PC-3 (cell line): ENCODE measurements at regions of chr18 and their contacts with region 1.

Region 1: GRCh38 chr18:71471963-71472725 is 1072.0 kb downstream of the CBLN2 start:
- DNase-seq: no peak
- ATAC-seq: no peak
- H3K4me3 ChIP-seq: no peak overlapping the region
- H3K27ac ChIP-seq: no peak overlapping the region
- H3K4me1 ChIP-seq: no peaks in the 10 kb centered on the region
- H3K27me3 ChIP-seq: no peaks in the 10 kb centered on the region
- CTCF ChIP-seq: no peak

Region 2: DNA sequence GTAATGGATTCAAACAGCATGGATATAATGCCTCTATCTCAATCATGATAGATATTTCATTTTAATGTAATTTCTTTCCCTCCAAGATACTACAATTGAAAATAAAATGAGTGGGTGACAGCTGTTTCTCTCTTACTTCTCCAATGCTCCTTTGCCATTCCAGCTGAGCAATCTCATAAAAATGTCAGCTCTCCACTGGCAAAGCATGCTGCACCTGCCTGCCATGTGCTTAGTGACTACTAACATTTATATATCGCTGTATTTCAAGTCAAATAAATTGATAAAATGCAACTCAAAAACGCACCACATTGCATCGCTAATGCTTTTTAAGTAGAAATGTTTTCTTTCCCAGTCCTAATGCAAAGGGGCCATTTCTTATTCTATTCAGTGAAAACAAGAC is 21.9 kb before region 1 on chr18:
- CTCF ChIA-PET with region 1: interaction called, 10 read pairs
- POLR2A ChIA-PET with region 1: no interaction called
- intact Hi-C with region 1: no loop called
- DNase-seq: no peak
- ATAC-seq: no peak
- H3K4me3 ChIP-seq: no peak overlapping the region
- H3K27ac ChIP-seq: no peak overlapping the region
- H3K4me1 ChIP-seq: no peaks in the 10 kb centered on the region
- H3K27me3 ChIP-seq: no peaks in the 10 kb centered on the region
- CTCF ChIP-seq: no peak

Region 3: GRCh38 chr18:71541633-71542032 is 69.5 kb after region 1 on chr18:
- CTCF ChIA-PET with region 1: no interaction called
- POLR2A ChIA-PET with region 1: no interaction called
- intact Hi-C with region 1: no loop called
- DNase-seq: no peak
- ATAC-seq: no peak
- H3K4me3 ChIP-seq: no peak overlapping the region
- H3K27ac ChIP-seq: no peak overlapping the region
- H3K4me1 ChIP-seq: no peaks in the 10 kb centered on the region
- H3K27me3 ChIP-seq: no peaks in the 10 kb centered on the region
- CTCF ChIP-seq: no peak